ENCODE measurements at regions of chr7 and their contacts with region 1.

Region 1: GRCh38 chr7:130277763-130278643 is 11.3 kb downstream of the CPA2 start:
- DNase-seq: peak; percentile 79
- H3K4me3 ChIP-seq: no peak overlapping the region
- H3K27ac ChIP-seq: peak overlapping the region; percentile 84
- H3K4me1 ChIP-seq: peaks cover 64% of the 10 kb centered on the region
- H3K27me3 ChIP-seq: no peaks in the 10 kb centered on the region
- CTCF ChIP-seq: peak; percentile 73

Region 2: DNA sequence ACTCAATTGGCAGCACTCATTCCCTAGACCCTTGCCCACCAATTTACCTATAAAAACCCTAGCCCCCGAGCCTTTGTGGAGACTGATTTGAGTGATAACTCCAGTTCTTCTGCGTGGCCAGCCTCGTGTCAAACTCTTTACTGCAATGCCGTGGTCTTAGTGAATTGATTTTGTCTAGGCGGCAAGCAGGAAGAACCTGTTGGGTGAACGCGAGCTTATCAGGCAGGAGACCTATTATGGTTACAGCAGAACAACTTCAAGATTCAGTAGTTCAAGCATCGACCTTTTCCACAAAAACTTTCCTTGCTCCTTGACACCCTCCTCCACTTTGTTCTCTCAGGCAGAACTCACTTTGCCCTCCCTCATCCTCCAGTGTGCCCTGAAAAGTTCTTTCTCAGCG is 58.1 kb before region 1 on chr7:
- CTCF ChIA-PET with region 1: no interaction called
- POLR2A ChIA-PET with region 1: no interaction called
- intact Hi-C with region 1: no loop called
- DNase-seq: no peak
- H3K4me3 ChIP-seq: no peak overlapping the region
- H3K27ac ChIP-seq: no peak overlapping the region
- H3K4me1 ChIP-seq: no peaks in the 10 kb centered on the region
- H3K27me3 ChIP-seq: no peaks in the 10 kb centered on the region
- CTCF ChIP-seq: no peak

Region 3: DNA sequence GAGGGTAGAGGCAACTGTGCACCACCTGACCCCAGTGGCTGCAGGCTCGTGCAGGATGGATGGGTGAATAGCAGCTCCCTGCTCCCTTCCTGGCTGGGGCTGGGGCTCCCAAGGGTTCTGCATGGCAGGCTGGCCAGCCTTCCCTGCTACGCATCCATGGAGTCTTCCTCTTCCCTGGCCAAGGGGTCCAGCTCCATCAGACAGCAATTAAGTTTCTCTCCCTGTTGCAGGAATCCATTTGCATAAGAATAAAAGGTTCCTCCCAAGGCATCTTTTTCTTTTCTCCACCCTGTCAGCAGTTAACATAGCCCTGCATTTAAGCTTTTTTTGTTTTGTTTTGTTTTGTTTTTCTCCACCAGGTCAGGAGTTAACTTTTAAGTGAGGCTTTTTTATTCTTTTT is 21.3 kb before region 1 on chr7:
- CTCF ChIA-PET with region 1: no interaction called
- POLR2A ChIA-PET with region 1: no interaction called
- intact Hi-C with region 1: no loop called
- DNase-seq: no peak
- H3K4me3 ChIP-seq: no peak overlapping the region
- H3K27ac ChIP-seq: no peak overlapping the region
- H3K4me1 ChIP-seq: no peaks in the 10 kb centered on the region
- H3K27me3 ChIP-seq: no peaks in the 10 kb centered on the region
- CTCF ChIP-seq: no peak

Region 4: DNA sequence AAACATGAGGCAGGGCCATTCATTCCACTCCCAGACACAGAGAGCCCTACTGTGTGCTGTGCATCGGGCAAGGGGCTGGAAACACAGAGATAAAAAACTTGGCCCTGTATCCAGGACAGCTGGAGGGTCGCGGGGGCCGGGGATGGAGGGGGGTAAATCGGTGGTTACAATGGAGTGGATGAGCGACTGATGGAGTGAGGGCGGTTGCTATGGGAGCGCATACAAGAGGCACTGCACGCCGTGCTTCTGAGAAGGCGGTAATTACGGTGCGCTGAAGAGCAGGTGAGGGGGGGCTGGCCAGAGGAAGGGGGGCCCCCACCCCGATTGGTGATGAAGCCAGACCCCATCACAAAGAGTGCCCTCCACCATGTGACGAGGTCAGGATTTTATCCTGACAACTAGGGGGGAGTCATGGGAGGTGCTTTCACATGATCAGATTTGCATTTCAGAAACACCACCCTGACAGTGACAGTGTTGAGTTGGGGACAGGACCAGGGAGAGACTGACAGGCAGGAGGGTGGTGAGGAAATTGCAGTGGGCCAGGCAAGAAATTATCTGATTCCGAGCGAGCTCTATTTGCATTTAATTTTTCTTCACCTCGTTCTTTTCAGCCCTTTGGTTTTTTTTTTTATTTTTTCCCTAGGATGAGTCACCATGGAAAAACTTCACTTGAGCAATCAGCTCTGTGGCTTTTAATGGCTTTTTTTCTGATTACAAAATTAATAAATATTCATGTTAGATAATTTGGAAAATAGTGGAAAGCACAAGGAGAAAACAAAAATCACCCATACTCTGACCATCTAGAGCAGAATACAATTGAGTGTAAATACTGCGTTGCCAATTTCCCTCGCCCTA is 74.4 kb after region 1 on chr7:
- CTCF ChIA-PET with region 1: no interaction called
- POLR2A ChIA-PET with region 1: no interaction called
- intact Hi-C with region 1: loop called (anchors 2 kb)
- DNase-seq: peak; percentile 31
- H3K4me3 ChIP-seq: no peak overlapping the region
- H3K27ac ChIP-seq: no peak overlapping the region
- H3K4me1 ChIP-seq: peaks cover 18% of the 10 kb centered on the region
- H3K27me3 ChIP-seq: no peaks in the 10 kb centered on the region
- CTCF ChIP-seq: no peak

Region 5: GRCh38 chr7:130490888-130491804 is 213.1 kb after region 1 on chr7:
- CTCF ChIA-PET with region 1: no interaction called
- POLR2A ChIA-PET with region 1: no interaction called
- intact Hi-C with region 1: loop called (anchors 5 kb)
- DNase-seq: no peak
- H3K4me3 ChIP-seq: peak overlapping the region; percentile 56
- H3K27ac ChIP-seq: no peak overlapping the region
- H3K4me1 ChIP-seq: peaks cover 3% of the 10 kb centered on the region
- H3K27me3 ChIP-seq: no peaks in the 10 kb centered on the region
- CTCF ChIP-seq: peak; percentile 52; the same call in 1 of the 2 replicates

Region 6: DNA sequence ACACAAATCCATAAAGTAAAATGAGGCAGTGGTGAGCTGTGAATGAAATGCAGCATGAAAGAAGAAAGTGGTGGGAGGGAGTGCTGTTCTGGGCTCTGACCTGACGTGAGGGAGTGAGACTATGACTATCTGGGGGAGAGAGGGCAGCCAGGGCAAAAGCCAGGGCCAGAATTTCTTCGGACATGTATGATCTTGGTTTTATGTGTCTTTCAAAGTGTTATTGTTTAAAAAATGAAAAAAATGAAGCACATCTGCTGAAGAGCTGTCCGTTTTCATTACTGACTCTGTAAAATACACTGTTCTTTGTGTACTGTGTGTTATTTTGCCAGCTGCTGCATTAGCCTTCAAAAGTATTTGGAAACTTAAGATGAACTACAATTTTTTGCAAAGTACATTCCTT is 526.2 kb after region 1 on chr7:
- CTCF ChIA-PET with region 1: no interaction called
- POLR2A ChIA-PET with region 1: no interaction called
- intact Hi-C with region 1: no loop called
- DNase-seq: no peak
- H3K4me3 ChIP-seq: no peak overlapping the region
- H3K27ac ChIP-seq: no peak overlapping the region
- H3K4me1 ChIP-seq: no peaks in the 10 kb centered on the region
- H3K27me3 ChIP-seq: no peaks in the 10 kb centered on the region
- CTCF ChIP-seq: no peak

Measured in A673 (cell line).